Dorsolateral prefrontal cortex (tissue), 120 donors: ENCODE measurements at regions of chr7 and their contacts with region 1.

Region 1: GRCh38 chr7:71733107-71733870 is 601.3 kb downstream of the GALNT17 start:
- DNase-seq: peak; percentile 74 to 90 (median 83)
- H3K4me3 ChIP-seq: peak overlapping the region in 44 of 59 donors; percentile 14 to 57 (median 40)
- H3K27ac ChIP-seq: no peak overlapping the region
- H3K27me3 ChIP-seq: peaks cover 0 to 10% (median 0%) of the 10 kb centered on the region in 45 donors
- CTCF ChIP-seq: peak; percentile 84 to 99 (median 96)

Region 2: DNA sequence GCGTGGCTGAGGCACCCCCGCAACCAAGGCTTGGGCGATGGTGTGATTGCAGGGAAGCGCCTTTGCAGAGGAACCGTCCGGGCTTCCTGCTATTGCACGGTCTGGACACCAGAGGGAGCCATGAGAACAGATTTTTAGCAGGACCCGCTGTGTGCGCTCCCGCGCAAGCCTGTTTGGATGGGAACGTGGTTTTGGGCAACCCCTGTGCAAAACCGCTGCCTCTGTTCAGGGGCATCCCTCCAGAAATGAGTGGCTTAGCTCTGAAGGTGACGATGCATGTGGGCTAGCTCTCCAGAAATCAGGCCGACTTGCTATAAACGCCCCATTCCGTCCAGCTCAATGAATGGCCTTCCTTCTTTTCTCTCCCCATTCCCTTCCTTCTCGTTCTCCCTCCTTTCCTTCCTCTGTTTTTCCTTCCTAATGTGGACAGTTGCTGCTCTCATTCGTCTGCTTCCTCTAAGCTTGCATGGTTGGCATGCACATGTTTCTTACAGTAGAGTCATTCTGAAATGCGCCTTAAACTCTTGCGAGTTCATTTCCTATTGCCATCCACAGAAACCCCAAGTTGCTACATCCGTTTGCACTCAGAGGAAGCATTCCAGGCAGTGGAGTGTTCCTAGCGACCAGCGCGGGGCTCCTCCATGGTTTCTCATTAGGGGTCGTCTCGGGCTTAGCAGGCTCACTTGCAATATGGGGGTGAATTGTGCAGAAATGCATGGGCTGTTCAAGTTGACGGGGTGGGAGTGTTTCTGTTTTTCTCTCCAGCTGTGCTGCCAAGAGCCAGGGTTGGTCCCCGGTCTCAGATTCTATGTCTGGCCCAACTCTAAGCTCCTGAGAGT is 903.8 kb before region 1 on chr7:
- intact Hi-C with region 1: loop called in 1 of 2 experiments (anchors 2 kb)
- DNase-seq: peak; percentile 61 to 84 (median 72)
- H3K4me3 ChIP-seq: peak overlapping the region in 56 of 59 donors; percentile 5 to 62 (median 40)
- H3K27ac ChIP-seq: no peak overlapping the region
- H3K27me3 ChIP-seq: peaks cover 0 to 5% (median 0%) of the 10 kb centered on the region in 45 donors
- CTCF ChIP-seq: peak; percentile 62 to 97 (median 90)

Region 3: DNA sequence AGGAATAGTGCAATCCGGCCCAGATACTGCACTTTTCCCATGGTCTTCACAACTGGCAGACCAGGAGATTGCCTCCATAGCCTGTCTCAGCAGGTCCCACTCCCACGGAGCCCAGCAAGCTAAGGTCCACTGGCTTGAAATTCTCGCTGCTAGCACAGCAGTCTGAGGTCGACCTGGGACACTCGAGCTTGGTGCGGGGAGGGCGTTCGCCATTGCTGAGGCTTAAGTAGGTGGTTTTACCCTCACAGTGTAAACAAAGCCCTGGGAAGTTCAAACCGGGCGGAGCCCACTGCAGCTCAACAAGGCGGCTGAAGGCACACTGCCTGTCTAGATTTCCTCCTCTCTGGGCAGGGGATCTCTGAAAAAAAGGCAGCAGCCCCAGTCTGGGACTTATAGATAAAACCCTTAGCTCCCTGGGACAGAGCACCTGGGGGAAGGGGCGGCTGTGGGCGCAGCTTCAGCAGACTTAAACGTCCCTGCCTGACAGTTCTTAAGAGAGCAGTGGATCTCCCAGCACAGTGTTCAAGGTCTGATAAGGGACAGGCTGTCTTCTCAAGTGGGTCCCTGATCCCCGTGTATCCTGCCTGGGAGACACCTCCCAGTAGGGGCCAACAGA is 894.9 kb before region 1 on chr7:
- intact Hi-C with region 1: loop called in 1 of 2 experiments (anchors 5 kb)
- DNase-seq: no peak
- H3K4me3 ChIP-seq: no peak overlapping the region
- H3K27ac ChIP-seq: no peak overlapping the region
- H3K27me3 ChIP-seq: peaks cover 0 to 9% (median 0%) of the 10 kb centered on the region in 45 donors
- CTCF ChIP-seq: no peak

Region 4: GRCh38 chr7:70856866-70857630 is 876.2 kb before region 1 on chr7:
- intact Hi-C with region 1: loop called (anchors 1 to 2 kb)
- DNase-seq: peak; percentile 67 to 89 (median 80)
- H3K4me3 ChIP-seq: no peak overlapping the region
- H3K27ac ChIP-seq: no peak overlapping the region
- H3K27me3 ChIP-seq: peaks cover 0 to 10% (median 0%) of the 10 kb centered on the region in 45 donors
- CTCF ChIP-seq: peak; percentile 90 to 100 (median 96)

Region 5: GRCh38 chr7:71131256-71132126 is 601.8 kb before region 1 on chr7:
- intact Hi-C with region 1: loop called in 1 of 2 experiments (anchors 10 kb)
- DNase-seq: peak; percentile 41 to 82 (median 72)
- H3K4me3 ChIP-seq: peak overlapping the region; percentile 22 to 74 (median 61)
- H3K27ac ChIP-seq: peak overlapping the region in 50 of 59 donors; percentile 5 to 89 (median 72)
- H3K27me3 ChIP-seq: peaks cover 0 to 57% (median 17%) of the 10 kb centered on the region in 45 donors
- CTCF ChIP-seq: peak in 9 of 56 donors; percentile 3 to 27 (median 12)